ENCODE measurements at regions of chr11 and their contacts with region 1.

Region 1: DNA sequence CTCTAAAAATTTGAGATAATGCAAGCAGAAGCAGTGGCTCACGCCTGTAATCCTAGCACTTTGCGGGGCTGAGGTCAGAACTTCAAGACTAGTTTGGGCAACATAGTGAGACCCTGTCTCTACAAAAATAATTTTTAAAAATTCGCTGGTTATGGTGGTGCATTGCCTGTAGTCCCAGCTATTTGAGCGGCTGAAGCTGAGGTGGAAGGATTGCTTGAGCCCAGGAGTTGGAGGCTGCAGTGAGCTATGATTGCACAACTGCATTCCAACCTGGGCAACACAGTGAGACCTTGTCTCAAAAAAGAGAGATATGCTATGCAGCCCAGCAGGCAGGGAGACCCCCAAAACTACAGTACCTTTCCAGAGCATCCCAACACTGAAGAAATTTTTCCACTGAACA is 2.3 kb downstream of the CTSC start:
- DNase-seq: no peak
- H3K4me3 ChIP-seq: peak overlapping the region in 1 of 4 donors; percentile 88
- H3K27ac ChIP-seq: peak overlapping the region in 3 of 4 donors; percentile 7 to 92 (median 12)
- H3K4me1 ChIP-seq: peaks cover 0 to 51% (median 8%) of the 10 kb centered on the region in 4 donors
- H3K27me3 ChIP-seq: no peaks in the 10 kb centered on the region
- CTCF ChIP-seq: no peak
- EP300 ChIP-seq: no peak
- POLR2A ChIP-seq: no peak

Region 2: GRCh38 chr11:88367310-88367709 is 32.0 kb after region 1 on chr11:
- in situ Hi-C with region 1: no loop called
- intact Hi-C with region 1: no loop called
- DNase-seq: no peak
- H3K4me3 ChIP-seq: no peak overlapping the region
- H3K27ac ChIP-seq: no peak overlapping the region
- H3K4me1 ChIP-seq: no peaks in the 10 kb centered on the region
- H3K27me3 ChIP-seq: no peaks in the 10 kb centered on the region
- CTCF ChIP-seq: no peak
- EP300 ChIP-seq: no peak
- POLR2A ChIP-seq: no peak

Region 3: GRCh38 chr11:88398368-88398767 is 63.1 kb after region 1 on chr11:
- in situ Hi-C with region 1: no loop called
- intact Hi-C with region 1: loop called (anchors 2 kb)
- DNase-seq: no peak
- H3K4me3 ChIP-seq: no peak overlapping the region
- H3K27ac ChIP-seq: peak overlapping the region in 1 of 4 donors; percentile 9
- H3K4me1 ChIP-seq: peaks cover 0 to 15% (median 0%) of the 10 kb centered on the region in 4 donors
- H3K27me3 ChIP-seq: no peaks in the 10 kb centered on the region
- CTCF ChIP-seq: no peak
- EP300 ChIP-seq: no peak
- POLR2A ChIP-seq: no peak

Measured in transverse colon (tissue), 4 donors.